A549 (cell line): ENCODE measurements at regions of chr3 and their contacts with region 1.

Region 1: GRCh38 chr3:39189959-39190269 is 2.5 kb downstream of the XIRP1 start:
- DNase-seq: peak; percentile 71 to 76
- ATAC-seq: peak; percentile 73 to 87
- H3K4me3 ChIP-seq: no peak overlapping the region
- H3K27ac ChIP-seq: no peak overlapping the region
- H3K4me1 ChIP-seq: no peaks in the 10 kb centered on the region; the same call in 2 of the 3 replicates
- CTCF ChIP-seq: peak; percentile 67
- EP300 ChIP-seq: no peak
- POLR2A ChIP-seq: no peak
- RAD21 ChIP-seq: peak; percentile 76 to 78

Region 2: GRCh38 chr3:38533285-38533976 is 656.5 kb before region 1 on chr3:
- CTCF ChIA-PET with region 1: no interaction called
- POLR2A ChIA-PET with region 1: no interaction called
- DNase-seq: no peak
- ATAC-seq: peak in 1 of 2 experiments; percentile 36; a peak in 2 of 6 replicates
- H3K4me3 ChIP-seq: no peak overlapping the region
- H3K27ac ChIP-seq: no peak overlapping the region
- H3K4me1 ChIP-seq: no peaks in the 10 kb centered on the region
- CTCF ChIP-seq: no peak
- EP300 ChIP-seq: no peak
- POLR2A ChIP-seq: no peak
- RAD21 ChIP-seq: no peak

Region 3: GRCh38 chr3:39101022-39101689 is 88.8 kb before region 1 on chr3:
- CTCF ChIA-PET with region 1: interaction called, 12 read pairs
- POLR2A ChIA-PET with region 1: no interaction called
- DNase-seq: peak; percentile 57 to 94
- ATAC-seq: peak; percentile 74 to 90
- H3K4me3 ChIP-seq: no peak overlapping the region
- H3K27ac ChIP-seq: no peak overlapping the region
- H3K4me1 ChIP-seq: peaks cover 5% of the 10 kb centered on the region; the same call in 2 of the 3 replicates
- CTCF ChIP-seq: peak; percentile 63
- EP300 ChIP-seq: no peak
- POLR2A ChIP-seq: no peak
- RAD21 ChIP-seq: peak; percentile 68 to 78

Region 4: GRCh38 chr3:39126532-39127071 is 63.3 kb before region 1 on chr3:
- CTCF ChIA-PET with region 1: interaction called, 95 read pairs
- POLR2A ChIA-PET with region 1: interaction called, 4 read pairs
- DNase-seq: peak in 1 of 2 experiments; percentile 72
- ATAC-seq: peak; percentile 73 to 88
- H3K4me3 ChIP-seq: no peak overlapping the region
- H3K27ac ChIP-seq: peak overlapping the region in 1 of 2 experiments; percentile 27; a peak in 1 of 6 replicates
- H3K4me1 ChIP-seq: peaks cover 18% of the 10 kb centered on the region
- CTCF ChIP-seq: peak; percentile 64
- EP300 ChIP-seq: no peak
- POLR2A ChIP-seq: no peak
- RAD21 ChIP-seq: peak; percentile 78 to 92

Region 5: DNA sequence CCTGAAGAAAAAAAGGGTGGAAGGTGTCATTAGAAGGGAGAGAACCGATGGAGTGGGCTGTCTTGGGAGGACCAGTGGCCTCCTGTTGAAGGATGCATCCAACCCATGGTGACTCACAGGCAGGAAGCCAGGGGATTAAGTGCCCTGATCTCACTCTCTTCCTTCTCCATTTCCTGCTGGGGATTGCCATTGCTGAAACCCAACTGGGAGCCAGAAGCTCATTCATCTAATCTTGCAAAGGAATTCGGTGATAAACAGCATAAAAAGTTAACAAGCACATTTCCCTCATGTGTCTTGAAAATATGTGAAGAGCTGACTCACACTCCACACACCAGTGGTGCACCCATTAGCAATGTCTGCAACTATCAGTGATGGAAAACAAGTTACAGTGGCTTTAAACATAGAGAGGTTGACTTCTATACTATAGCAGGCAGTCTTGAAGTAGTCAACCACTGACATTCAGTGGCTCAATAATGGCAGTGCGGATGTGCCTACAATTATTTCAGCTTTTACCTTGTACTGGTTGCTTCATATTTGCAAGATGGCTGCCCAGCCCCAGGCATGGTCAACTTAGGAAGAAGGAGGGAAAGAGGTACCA is 23.7 kb before region 1 on chr3:
- CTCF ChIA-PET with region 1: interaction called, 15 read pairs
- POLR2A ChIA-PET with region 1: no interaction called
- DNase-seq: peak in 1 of 2 experiments; percentile 55
- ATAC-seq: peak; percentile 75 to 85; a peak in 5 of 6 replicates
- H3K4me3 ChIP-seq: no peak overlapping the region
- H3K27ac ChIP-seq: peak overlapping the region; percentile 14 to 32; a peak in 4 of 6 replicates
- H3K4me1 ChIP-seq: peaks cover 25% of the 10 kb centered on the region; the same call in 2 of the 3 replicates
- CTCF ChIP-seq: no peak
- EP300 ChIP-seq: no peak
- POLR2A ChIP-seq: no peak
- RAD21 ChIP-seq: no peak

Region 6: DNA sequence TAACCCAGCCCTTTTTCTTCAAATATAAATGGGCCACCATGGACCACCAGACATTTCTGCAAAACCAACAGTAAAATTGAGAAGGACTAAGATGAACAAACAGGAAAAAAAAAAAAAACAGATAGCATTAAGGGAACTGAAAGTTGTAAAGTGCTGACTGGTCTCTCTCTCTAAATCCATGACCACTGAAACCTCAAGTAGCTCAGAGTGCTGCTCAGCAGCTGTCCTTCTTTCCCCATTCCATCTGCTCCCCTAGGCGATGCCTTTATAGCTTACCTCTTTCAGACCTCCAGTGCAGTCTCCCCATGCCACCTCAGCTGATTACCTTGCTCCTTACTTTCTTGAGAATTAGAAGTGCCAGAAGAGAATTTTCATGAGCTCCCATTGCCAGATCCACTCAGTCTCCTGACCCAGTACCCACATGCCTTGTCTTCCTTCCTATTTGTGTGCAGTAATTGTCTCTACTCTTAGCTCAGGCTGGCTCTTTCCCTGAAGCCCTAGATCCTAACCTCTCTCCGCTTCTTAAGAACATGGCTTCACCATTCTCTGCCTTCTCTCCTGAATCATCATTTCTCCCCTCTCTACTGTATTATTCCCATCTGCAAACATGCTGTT is 26.4 kb after region 1 on chr3:
- CTCF ChIA-PET with region 1: interaction called, 12 read pairs
- POLR2A ChIA-PET with region 1: no interaction called
- DNase-seq: no peak
- ATAC-seq: no peak
- H3K4me3 ChIP-seq: no peak overlapping the region
- H3K27ac ChIP-seq: no peak overlapping the region
- H3K4me1 ChIP-seq: no peaks in the 10 kb centered on the region
- CTCF ChIP-seq: no peak
- EP300 ChIP-seq: no peak
- POLR2A ChIP-seq: no peak
- RAD21 ChIP-seq: no peak